ENCODE measurements at regions of chr5 and their contacts with region 1.

Region 1: GRCh38 chr5:66306105-66306843 is 162.2 kb downstream of the SREK1 start:
- DNase-seq: no peak
- H3K4me3 Mint-ChIP-seq: no peak overlapping the region
- H3K27ac Mint-ChIP-seq: no peak overlapping the region
- H3K4me1 Mint-ChIP-seq: peaks cover 5% of the 10 kb centered on the region
- H3K27me3 Mint-ChIP-seq: peaks cover 12% of the 10 kb centered on the region

Region 2: DNA sequence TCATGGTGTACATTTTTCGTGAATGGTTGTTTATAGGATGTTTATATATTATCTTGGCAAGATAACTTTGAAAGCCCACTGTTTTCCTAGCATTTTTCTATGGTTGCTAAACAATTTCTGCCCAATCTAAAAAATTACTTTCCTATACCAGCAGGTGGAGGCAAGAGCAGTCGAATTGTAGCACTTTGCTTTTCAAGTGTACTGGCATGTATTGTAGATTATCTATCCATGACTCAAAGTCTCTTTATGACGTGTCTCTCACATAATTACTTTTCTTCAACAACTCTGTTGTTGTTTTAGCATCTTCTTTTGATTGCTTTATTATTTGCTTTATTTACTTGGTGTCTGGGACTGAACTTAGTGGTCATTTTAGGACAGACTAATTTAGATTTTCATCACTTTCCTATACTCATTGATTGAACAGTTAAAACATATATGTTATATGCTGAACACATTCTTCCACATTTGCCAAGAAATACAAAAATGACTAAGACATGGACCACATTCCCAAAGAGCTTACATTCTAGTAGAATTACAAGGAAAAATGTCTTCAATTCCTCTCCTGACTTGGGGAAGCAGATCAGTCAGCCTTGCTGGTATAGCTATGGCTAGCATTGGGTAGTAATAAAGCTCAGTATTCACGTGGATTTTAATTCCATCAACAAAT is 563.6 kb before region 1 on chr5:
- intact Hi-C with region 1: loop called (anchors 1 kb)
- DNase-seq: no peak
- H3K4me3 Mint-ChIP-seq: no peak overlapping the region
- H3K27ac Mint-ChIP-seq: no peak overlapping the region
- H3K4me1 Mint-ChIP-seq: peaks cover 16% of the 10 kb centered on the region
- H3K27me3 Mint-ChIP-seq: peaks cover 3% of the 10 kb centered on the region

Region 3: GRCh38 chr5:66213533-66213932 is 92.7 kb before region 1 on chr5:
- intact Hi-C with region 1: no loop called
- DNase-seq: no peak
- H3K4me3 Mint-ChIP-seq: no peak overlapping the region
- H3K27ac Mint-ChIP-seq: no peak overlapping the region
- H3K4me1 Mint-ChIP-seq: no peaks in the 10 kb centered on the region
- H3K27me3 Mint-ChIP-seq: peaks cover 6% of the 10 kb centered on the region

Region 4: DNA sequence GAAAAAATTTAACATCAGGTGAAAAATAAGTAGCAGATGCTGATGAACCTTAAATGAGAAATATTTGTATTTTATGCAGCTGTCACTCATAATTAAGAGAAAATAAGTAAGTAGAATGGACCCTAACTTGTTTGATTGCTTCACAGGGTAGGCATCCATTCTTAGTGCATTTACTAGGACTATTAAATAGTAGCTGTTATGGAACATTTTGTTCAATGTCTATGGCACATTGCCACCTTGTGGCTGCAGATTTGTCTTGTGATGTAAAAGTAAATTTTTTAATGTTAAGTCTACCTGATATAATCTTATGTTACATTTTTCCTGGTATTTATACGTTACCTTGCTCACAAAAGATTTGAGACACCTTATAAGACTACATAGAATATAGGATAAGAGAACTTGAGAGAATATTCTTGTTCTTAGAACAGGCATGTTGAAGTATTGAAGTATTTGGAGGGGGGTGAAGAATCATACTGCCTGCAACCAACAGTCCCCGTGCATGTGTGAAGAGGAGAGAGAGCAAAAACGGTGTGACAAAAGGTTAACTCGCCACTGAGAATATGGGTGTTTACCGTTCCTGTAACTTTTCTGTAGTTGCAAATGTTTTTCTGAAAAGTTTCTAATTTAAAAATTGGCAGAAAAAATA is 451.0 kb after region 1 on chr5:
- intact Hi-C with region 1: loop called (anchors 1 kb)
- DNase-seq: no peak
- H3K4me3 Mint-ChIP-seq: no peak overlapping the region
- H3K27ac Mint-ChIP-seq: no peak overlapping the region
- H3K4me1 Mint-ChIP-seq: no peaks in the 10 kb centered on the region
- H3K27me3 Mint-ChIP-seq: peaks cover 26% of the 10 kb centered on the region

Region 5: GRCh38 chr5:66864331-66864840 is 558.1 kb after region 1 on chr5:
- intact Hi-C with region 1: loop called (anchors 1 kb)
- DNase-seq: peak; percentile 12
- H3K4me3 Mint-ChIP-seq: no peak overlapping the region
- H3K27ac Mint-ChIP-seq: no peak overlapping the region
- H3K4me1 Mint-ChIP-seq: peaks cover 62% of the 10 kb centered on the region
- H3K27me3 Mint-ChIP-seq: peaks cover 3% of the 10 kb centered on the region

Region 6: DNA sequence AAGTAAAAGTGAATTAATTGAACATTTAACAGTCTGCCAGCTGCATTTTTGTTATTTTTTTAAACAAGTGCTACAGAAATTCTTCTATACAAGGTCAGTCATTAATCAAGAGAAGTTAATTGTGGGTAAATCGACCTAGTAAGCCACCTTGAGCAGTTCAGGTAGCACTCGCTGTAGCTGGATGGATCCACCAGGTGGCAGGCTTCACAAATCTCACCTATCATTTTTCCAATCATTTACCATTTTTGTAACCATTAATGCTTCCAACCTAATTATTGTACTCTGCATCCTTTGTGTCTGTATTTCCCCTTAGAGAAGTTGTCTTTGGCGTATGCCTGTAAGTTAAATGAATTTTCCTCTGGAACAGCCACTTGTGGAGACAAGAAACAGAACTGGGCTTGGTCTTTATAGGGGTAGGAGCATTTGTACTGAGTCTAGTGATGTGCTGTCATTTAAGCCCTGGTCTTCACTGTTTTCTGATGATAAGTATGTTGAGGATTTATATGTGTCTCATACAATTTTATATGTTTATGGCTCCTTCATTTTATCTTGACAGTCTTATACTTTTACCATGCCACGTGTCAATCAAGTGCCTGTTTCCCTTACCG is 850.8 kb after region 1 on chr5:
- intact Hi-C with region 1: loop called (anchors 2 kb)
- DNase-seq: no peak
- H3K4me3 Mint-ChIP-seq: no peak overlapping the region
- H3K27ac Mint-ChIP-seq: peak overlapping the region; percentile 25
- H3K4me1 Mint-ChIP-seq: peaks cover 51% of the 10 kb centered on the region
- H3K27me3 Mint-ChIP-seq: no peaks in the 10 kb centered on the region